Right ventricle myocardium inferior (tissue), 1 donor: ENCODE measurements at regions of chr6 and their contacts with region 1.

Region 1: DNA sequence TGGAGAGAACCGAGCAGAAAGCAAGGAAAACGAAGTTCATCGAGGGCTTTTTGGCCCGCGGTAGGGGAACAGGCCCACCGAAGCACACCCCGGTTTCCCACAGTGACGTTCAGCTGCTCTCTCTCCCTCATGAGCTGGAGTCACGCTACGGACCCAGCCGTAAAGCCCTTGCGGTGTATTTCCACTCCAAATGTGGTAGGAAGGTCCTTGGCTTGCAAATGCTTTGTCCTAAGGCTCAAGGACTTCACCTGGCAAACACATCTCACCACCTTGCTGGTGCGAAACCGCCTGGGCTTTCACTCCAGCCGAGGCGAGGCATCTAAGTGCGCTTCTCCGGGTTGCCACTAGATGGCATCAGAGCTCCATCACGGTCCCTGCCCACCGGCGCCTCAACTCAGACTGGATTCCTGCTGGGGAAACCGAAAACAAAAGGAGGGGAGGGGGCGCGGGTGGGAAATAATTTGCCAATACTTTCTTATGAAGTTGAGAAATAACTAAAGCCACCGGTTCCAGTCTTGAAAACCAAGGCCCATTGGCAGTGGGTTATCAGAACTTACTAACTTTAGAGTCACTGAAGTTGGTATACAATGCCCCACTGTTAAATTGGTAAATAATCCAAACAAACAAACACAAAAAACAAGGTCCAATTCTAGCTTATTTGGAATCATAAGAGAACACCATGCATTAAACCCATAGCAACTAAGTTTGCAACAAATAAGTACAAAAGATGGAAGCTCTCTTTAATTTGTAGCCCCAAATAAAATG is 13.4 kb upstream of the FOXC1 start:
- DNase-seq: peak; percentile 85
- ATAC-seq: peak; percentile 81

Region 2: DNA sequence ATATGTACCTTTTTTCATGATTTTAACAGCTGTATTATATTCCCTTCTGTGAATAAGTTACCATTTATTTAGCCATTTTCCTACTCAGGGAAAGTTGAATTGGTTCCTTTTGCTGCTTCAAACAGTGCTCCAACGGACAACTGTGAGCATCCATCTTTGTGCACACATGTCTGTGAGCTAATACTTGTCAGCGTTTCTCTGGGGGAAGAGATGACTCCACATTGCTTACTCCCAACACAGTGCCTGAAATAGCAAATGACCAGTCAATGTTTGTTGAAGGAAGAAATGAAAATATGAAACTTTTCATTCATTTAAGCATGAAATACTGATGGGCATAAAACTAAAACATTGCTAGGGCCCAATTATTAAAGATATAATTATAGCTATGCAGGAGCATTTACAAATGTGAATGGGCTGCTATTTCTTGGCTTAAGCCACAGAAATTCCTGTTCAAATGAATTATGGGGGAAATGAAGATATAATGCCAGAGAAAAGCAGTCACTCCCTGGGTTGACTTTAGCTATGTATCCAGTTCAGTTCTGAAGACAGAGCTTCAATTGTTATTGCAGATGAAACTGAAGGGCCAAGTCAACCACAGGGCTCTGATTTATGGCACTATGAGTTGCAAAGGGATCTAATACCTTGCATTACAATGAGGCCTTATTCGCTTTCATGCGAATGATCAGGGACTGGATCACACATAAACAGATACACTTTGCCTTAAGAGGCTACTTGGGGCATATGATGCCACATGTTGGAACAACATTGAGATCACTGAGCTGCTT is 33.9 kb before region 1 on chr6:
- intact Hi-C with region 1: no loop called
- DNase-seq: no peak
- ATAC-seq: no peak

Region 3: GRCh38 chr6:2196079-2196679 is 599.9 kb after region 1 on chr6:
- intact Hi-C with region 1: loop called (anchors 2 kb)
- DNase-seq: no peak
- ATAC-seq: peak; percentile 50

Region 4: DNA sequence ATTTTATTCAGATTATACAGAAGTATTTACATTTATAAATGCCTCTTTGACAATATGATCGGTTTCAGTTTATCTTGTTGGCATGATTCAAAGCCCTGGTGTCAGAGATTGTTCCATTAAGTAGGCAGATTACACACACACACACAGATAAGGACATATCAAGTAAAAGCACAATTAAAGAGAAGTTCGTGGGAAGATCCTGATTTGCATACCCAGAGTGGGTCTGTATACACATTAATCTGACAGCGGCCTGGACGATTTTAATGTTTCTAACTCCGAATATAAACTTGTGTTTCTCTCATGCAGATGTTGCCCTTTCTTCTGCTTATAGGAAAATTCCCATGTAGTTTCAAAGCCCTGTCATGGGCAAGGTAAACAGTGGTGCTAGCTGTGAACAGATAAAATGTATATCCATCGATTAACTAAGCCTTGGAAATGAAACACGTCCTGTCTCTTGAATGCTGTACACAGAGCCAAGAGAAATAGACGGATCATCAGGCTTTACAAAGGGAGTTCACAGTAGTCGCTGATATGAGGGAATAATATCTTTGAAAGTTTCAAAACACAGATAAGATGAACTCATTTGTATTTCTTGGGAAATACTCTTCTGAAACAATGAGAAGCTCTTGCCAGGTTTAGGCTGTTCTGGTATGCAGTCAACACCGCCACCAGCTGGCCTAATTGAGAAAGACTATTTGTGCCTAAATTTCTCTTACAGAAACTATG is 757.3 kb after region 1 on chr6:
- intact Hi-C with region 1: loop called (anchors 2 kb)
- DNase-seq: peak; percentile 69
- ATAC-seq: peak; percentile 60

Region 5: GRCh38 chr6:2695454-2696095 is 1099.3 kb after region 1 on chr6:
- intact Hi-C with region 1: loop called (anchors 5 kb)
- DNase-seq: no peak
- ATAC-seq: no peak

Region 6: GRCh38 chr6:2749969-2750600 is 1153.8 kb after region 1 on chr6:
- intact Hi-C with region 1: loop called (anchors 10 kb)
- DNase-seq: peak; percentile 71
- ATAC-seq: peak; percentile 42